ENCODE measurements at regions of chr16 and their contacts with region 1.

Region 1: DNA sequence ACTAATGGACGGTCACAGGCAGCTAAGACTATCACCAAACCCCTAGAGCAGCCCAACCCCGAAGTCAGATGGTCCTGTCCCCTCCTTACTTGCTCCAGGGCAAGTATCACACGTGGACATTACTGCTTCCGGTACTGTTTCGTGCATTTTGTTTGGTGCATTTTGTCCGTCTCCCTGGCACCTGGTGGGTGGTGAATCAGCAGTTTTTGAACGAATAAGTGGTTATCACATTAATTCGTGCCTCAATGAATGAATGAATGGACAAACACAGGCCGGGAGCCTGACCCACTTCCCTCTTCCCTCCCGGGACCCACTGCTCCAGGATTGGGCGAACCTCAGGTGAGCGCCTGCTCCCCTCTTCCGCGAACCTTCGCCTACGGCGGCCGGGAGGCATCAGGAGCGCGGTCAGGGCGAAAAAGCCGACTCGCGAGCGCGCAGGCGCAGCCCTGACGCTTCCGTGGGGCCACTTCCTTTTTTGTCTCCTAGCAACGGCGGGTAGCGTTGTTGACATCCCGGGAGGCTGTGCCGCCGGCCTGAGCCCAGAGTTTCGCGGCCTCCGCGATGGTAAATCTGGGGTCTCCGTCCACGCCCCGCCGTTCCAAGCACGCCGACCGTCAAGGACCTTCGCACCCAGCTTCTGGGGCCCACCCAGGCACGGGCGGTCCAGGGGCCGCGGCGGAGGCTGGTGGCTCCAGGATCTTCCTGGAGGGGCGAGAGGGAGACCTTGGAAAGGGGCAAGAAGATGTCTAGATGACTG is at the start of gene DYNLRB2:
- DNase-seq: peak; percentile 96
- H3K4me3 ChIP-seq: peak within 1 kb of the TSS; percentile 54
- H3K27ac ChIP-seq: peak within 1 kb of the TSS; percentile 5
- H3K4me1 ChIP-seq: no peaks in the 10 kb centered on the region
- H3K27me3 ChIP-seq: no peaks in the 10 kb centered on the region
- CTCF ChIP-seq: no peak
- total RNA-seq, gene DYNLRB2: not detected

Region 2: GRCh38 chr16:80804056-80804450 is 263.4 kb after region 1 on chr16:
- intact Hi-C with region 1: loop called (anchors 10 kb)
- DNase-seq: peak; percentile 36
- H3K4me3 ChIP-seq: peak overlapping the region; percentile 52
- H3K27ac ChIP-seq: no peak overlapping the region
- H3K4me1 ChIP-seq: no peaks in the 10 kb centered on the region
- H3K27me3 ChIP-seq: no peaks in the 10 kb centered on the region
- CTCF ChIP-seq: no peak